HEK293T (cell line): ENCODE measurements at regions of chr7 and their contacts with region 1.

Region 1: GRCh38 chr7:135801045-135801693 is 52.6 kb upstream of the FAM180A start:
- DNase-seq: peak; percentile 83

Region 2: DNA sequence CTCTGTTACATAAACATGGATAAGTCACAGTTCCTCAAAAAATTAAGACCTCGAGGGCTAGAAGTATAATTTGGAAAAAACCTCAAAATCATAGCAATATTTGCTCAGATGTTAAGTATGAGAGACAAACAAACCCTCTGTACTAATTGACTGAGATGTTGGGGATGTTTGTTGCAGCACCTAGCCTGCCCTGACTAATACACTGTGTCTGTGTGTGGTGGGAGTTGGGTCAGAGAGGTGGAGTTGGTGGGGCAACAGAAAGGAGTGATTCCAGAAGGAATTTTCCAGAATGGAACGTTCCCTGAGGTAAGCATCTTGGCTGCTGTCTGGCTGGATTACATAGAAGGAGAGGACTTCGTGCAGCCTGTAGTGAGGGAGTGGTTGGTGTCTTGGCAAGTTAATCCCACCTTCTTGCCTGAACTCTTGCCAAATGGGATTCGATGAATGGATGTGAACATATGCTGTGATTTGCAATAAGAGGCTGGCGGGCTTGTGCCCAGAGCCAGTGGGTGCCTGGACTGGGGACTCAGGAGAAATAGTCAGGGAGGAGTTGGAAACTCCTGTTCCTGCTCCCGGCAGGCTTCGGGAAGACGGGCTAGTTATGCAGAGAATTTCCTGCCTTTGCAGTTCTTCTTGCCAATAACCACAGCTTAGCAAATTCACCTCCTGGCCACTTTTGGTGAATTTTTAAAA is 43.3 kb before region 1 on chr7:
- CTCF ChIA-PET with region 1: no interaction called
- POLR2A ChIA-PET with region 1: no interaction called
- DNase-seq: no peak

Region 3: GRCh38 chr7:136009488-136010079 is 208.4 kb after region 1 on chr7:
- CTCF ChIA-PET with region 1: interaction called, 18 read pairs
- POLR2A ChIA-PET with region 1: no interaction called
- DNase-seq: peak; percentile 45